ENCODE measurements at regions of chr22 and their contacts with region 1.

Region 1: DNA sequence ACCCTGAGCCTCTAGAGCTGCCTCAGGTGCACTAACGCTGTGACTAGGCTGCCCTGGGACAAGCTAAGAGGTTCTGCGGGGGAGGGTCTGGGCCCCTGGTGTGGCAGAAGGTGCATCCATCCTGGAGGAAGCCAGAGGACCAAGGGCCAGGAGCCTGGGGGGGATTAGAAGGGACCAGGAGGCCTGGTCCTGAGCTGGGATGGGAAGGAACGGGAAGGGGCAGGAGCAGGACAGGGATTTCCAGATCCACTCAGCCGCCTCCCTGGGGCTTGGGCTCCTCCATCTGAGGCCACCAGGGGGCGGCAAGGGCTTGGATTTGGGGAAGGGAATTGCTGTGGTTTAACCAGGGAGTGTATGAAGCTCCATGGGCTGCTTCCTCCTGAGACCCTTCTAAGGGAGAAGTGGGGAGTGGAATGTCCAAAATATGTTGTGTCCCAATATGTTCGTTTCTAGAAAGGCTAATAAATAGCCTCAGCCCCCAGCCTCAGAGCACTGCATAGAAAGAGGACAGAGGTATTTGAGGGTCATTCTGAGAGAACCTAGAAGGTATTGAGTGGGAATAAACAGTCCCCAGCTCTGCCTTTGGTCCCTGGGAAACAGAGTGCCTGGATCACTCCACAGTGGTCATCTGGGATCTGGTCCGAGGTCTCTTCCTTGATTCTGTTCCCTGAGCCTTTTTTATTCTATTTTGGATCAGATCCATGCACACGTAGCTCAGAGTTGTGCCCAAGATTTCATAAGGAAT is 17.4 kb upstream of the PRAME start:
- DNase-seq: peak; percentile 84
- ATAC-seq: peak; percentile 96
- H3K4me3 Mint-ChIP-seq: no peak overlapping the region
- H3K27ac Mint-ChIP-seq: no peak overlapping the region
- H3K4me1 Mint-ChIP-seq: no peaks in the 10 kb centered on the region
- H3K27me3 Mint-ChIP-seq: peaks cover 97% of the 10 kb centered on the region
- CTCF ChIP-seq: peak; percentile 72

Region 2: DNA sequence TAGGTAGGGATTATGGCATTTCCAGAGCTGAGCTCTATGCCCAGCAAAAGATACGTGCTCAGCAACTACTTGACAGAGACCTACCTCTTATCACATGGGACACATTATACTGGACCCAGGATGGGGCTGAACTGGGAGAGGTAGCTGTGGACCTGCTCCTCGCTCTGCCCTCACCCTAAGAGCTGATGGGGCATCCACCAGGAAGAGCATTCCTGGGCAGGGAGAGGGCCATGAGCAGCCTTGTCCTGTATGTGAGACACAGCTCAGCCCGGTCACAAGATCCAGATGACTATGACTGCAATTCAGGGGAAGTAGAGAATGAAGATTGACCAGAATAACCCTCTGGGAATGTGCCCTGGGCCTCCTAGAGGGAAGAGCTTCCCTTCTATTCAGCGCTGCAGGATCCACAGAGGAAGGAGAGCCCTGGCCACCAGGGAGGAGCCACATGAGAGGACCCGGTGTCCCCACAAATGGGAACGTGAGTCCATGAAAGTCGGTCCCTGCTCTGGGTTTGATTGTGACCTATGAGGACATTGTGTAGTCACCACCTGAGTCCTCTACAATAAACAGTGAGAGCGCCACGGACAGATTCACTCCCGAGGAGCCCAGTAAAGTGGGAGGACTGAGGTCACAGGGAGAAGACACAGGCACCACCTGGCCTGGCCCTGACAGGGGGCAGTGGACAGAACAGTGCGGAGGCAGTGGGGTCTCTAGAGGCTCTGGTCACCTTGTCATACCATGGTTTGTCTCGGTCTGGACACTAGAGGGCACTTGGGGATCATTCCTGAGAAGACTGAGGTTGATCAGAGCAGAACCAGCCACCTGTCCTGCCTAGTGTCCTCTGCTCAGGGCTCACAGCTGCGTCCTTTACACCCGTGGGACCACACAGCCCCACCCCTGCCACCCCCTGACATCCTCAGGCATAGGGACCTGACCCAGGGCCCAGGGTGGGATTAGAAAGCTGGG is 167.4 kb before region 1 on chr22:
- CTCF ChIA-PET with region 1: no interaction called
- POLR2A ChIA-PET with region 1: no interaction called
- DNase-seq: peak; percentile 51
- ATAC-seq: peak; percentile 89
- H3K4me3 Mint-ChIP-seq: no peak overlapping the region
- H3K27ac Mint-ChIP-seq: no peak overlapping the region
- H3K4me1 Mint-ChIP-seq: no peaks in the 10 kb centered on the region
- H3K27me3 Mint-ChIP-seq: peaks cover 100% of the 10 kb centered on the region
- CTCF ChIP-seq: peak; percentile 32

Region 3: DNA sequence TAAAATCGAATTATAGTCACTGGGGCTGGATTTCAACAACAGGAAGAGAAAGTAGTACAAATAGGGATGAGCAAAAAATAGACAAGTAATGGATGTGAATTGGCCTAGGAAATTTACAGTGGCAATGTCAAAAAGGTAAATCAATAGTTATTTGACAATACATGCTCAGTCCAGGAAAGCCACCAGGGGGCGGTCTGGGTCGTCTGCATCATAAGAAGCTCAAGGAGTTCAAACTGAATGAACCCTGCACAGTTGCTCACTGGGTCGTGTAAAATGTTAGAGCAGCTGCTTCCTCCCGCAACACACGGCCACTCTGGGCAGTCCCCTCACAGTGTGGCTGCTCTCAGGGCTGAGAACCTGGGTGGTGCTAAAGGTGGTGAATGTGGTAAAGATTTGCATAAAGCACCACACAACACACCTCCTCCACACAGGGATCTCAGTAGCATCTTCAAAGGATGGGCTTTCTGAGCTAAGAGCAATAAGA is 153.7 kb before region 1 on chr22:
- CTCF ChIA-PET with region 1: interaction called, 10 read pairs
- POLR2A ChIA-PET with region 1: no interaction called
- DNase-seq: peak; percentile 82
- ATAC-seq: peak; percentile 75
- H3K4me3 Mint-ChIP-seq: no peak overlapping the region
- H3K27ac Mint-ChIP-seq: no peak overlapping the region
- H3K4me1 Mint-ChIP-seq: peaks cover 16% of the 10 kb centered on the region
- H3K27me3 Mint-ChIP-seq: peaks cover 98% of the 10 kb centered on the region
- CTCF ChIP-seq: peak; percentile 52

Region 4: DNA sequence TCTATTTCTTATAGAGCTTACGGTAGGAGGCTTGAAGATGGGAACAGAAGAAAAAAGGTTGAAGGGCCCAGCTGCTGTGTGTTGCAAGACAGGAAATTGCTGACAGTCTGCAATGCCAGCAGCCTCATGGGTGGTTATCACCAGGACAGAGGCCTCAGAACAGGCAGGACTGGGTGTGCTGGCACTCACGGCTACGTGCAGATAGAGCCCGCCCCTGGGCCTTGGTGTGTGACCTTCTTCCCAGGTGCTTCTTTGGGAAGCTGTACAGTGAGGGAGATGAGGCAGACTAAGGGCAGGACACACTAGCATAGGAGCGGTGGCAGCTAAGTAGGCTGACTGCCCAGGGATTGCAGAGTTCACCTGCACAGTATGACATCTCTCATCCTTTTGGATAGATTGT is 29.9 kb before region 1 on chr22:
- CTCF ChIA-PET with region 1: no interaction called
- POLR2A ChIA-PET with region 1: no interaction called
- DNase-seq: no peak
- ATAC-seq: no peak
- H3K4me3 Mint-ChIP-seq: no peak overlapping the region
- H3K27ac Mint-ChIP-seq: no peak overlapping the region
- H3K4me1 Mint-ChIP-seq: no peaks in the 10 kb centered on the region
- H3K27me3 Mint-ChIP-seq: peaks cover 100% of the 10 kb centered on the region
- CTCF ChIP-seq: no peak

Region 5: GRCh38 chr22:22558972-22559603 is 17.3 kb before region 1 on chr22 and contains the start of gene PRAME:
- CTCF ChIA-PET with region 1: interaction called, 31 read pairs
- POLR2A ChIA-PET with region 1: no interaction called
- DNase-seq: peak; percentile 93
- ATAC-seq: peak; percentile 97
- H3K4me3 Mint-ChIP-seq: no peak within 1 kb of the TSS
- H3K27ac Mint-ChIP-seq: no peak within 1 kb of the TSS
- H3K4me1 Mint-ChIP-seq: no peaks in the 10 kb centered on the region
- H3K27me3 Mint-ChIP-seq: peaks cover 79% of the 10 kb centered on the region
- CTCF ChIP-seq: peak; percentile 89
- total RNA-seq, gene PRAME: 1.4 to 1.7 TPM (median 1.5 TPM) in 3 replicates

Region 6: DNA sequence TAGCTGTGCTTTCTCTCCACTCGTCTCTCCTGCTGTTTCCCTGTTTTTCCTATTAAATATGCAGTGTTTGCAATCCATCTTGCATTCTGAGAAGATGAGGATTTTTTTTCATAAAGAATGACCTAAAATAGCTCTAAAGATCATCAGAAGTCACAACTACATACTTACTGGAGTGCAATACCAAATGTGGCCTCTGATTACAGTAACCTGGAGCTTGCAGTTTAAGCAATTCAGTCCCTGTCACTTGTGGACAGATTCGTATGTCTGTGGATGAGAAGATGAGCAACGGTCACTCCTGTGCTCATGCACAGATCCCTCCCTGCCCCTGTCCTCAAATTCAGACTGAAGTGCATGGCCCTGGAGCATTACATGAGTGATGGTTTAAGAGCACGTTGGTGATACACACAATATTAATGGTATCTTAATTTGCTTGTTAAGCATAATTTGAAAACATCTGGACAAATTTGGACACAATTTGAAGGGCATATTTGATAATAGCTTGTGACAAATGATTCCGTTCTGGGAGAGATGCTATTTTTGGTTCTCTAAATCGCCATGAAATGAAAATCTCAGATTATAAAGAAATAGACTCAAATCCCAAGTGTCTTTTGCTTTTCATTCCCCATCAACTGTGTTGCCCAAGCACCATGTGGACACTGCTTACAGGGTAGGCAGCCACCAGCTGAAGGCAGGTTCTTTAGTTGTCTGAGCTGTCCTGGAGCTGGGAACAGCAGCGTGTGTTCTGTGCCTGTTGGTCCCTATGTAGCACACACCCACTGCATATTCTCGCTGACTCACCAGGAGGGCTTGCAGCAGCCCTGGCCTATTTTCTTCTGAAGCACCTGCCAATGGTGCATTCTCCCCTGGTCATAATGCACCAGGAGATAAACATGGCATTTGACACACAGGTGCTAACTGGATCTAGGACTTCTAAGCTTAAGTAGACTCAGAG is 15.2 kb after region 1 on chr22:
- CTCF ChIA-PET with region 1: interaction called, 103 read pairs
- POLR2A ChIA-PET with region 1: no interaction called
- DNase-seq: no peak
- ATAC-seq: no peak
- H3K4me3 Mint-ChIP-seq: no peak overlapping the region
- H3K27ac Mint-ChIP-seq: no peak overlapping the region
- H3K4me1 Mint-ChIP-seq: no peaks in the 10 kb centered on the region; the same call in 1 of the 2 replicates
- H3K27me3 Mint-ChIP-seq: peaks cover 93% of the 10 kb centered on the region
- CTCF ChIP-seq: no peak

Region 7: DNA sequence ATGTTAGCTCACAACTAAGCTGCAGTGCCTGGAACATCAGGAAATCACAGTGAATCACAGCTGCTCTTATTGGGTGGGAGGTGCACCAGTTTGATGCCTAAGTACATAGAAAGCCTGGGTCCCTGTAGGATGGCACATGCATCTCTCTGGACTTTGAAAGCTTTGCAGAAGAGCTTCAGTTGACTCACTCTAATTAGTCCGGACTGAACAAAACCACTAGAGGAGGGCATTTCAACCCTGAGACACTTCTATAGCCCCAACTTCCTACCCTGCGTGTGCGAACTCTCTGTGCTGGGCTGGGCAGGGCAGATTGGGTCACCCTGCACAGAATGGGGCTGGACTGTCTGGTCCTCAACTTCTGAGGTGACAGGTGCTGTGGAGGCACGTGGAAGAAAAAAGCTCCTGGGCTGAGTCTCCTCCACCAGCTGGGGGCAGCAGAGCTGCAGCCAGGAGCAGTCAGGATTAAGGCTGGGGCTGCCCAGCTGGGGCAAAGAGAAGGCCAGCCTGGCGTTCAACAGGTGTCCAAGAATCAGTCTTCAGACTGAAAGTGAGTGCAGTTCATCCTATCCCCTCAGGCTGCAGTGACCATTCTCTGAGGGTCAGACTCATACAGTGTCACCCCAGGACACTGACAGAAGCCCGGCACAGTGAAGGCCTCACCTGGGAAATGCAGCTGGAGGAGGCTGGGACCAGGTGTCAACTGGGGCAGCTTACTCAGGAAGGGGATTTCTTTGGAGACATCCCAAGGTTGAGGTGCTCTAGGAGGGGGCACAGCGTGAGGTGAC is 90.1 kb after region 1 on chr22:
- CTCF ChIA-PET with region 1: interaction called, 24 read pairs
- POLR2A ChIA-PET with region 1: no interaction called
- DNase-seq: peak; percentile 71
- ATAC-seq: peak; percentile 95
- H3K4me3 Mint-ChIP-seq: no peak overlapping the region
- H3K27ac Mint-ChIP-seq: no peak overlapping the region
- H3K4me1 Mint-ChIP-seq: no peaks in the 10 kb centered on the region
- H3K27me3 Mint-ChIP-seq: peaks cover 96% of the 10 kb centered on the region
- CTCF ChIP-seq: peak; percentile 23; the same call in 1 of the 2 replicates

Region 8: DNA sequence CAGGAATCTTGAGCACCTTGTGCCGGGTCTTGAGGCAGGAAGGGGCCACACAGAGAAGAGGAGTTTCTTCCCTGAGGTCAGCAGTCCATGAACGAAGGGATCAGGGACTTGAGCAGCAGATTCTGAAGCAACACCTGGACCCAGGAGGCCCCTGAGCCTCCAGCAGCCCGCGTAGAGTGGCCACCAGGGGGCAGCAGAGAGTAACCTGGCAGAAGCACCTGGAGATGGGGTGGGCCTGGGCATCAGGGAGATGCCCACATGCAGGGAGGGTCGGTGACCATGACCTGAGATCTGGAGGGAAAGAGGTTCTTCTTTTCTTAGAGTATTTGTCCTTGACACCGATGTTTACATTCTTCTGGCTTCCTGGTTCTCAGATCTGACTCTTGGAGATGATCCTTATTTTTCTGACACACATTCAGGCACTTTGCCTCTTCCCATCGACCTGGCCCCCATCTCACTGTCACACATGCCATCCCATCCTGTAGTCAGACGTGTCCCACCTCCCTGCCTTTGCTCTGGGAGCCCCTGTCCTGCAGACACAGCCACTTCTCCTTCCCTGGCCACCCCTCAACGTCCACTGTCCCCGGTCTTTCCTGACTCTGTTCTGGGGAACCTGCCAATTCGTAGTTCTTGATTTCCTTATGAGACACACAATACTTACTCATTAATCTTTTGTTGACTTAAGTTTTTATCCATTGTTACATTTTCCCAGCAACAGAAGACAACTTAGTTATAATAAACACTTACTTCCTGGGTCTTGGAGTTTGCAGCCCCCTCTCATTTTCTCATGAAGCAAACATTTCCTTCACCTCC is 134.5 kb after region 1 on chr22:
- CTCF ChIA-PET with region 1: interaction called, 20 read pairs
- POLR2A ChIA-PET with region 1: no interaction called
- DNase-seq: peak; percentile 83
- ATAC-seq: peak; percentile 77
- H3K4me3 Mint-ChIP-seq: no peak overlapping the region
- H3K27ac Mint-ChIP-seq: no peak overlapping the region
- H3K4me1 Mint-ChIP-seq: no peaks in the 10 kb centered on the region
- H3K27me3 Mint-ChIP-seq: peaks cover 99% of the 10 kb centered on the region
- CTCF ChIP-seq: peak; percentile 96

Region 9: GRCh38 chr22:22890085-22890484 is 313.7 kb after region 1 on chr22:
- CTCF ChIA-PET with region 1: no interaction called
- POLR2A ChIA-PET with region 1: no interaction called
- DNase-seq: no peak
- ATAC-seq: no peak
- H3K4me3 Mint-ChIP-seq: no peak overlapping the region
- H3K27ac Mint-ChIP-seq: no peak overlapping the region
- H3K4me1 Mint-ChIP-seq: no peaks in the 10 kb centered on the region
- H3K27me3 Mint-ChIP-seq: peaks cover 84% of the 10 kb centered on the region
- CTCF ChIP-seq: no peak